Activated naive CD4-positive, alpha-beta T cell treated with anti-CD3 and anti-CD28 coated beads for 36 hours (primary cell): ENCODE measurements at regions of chr10 and their contacts with region 1.

Region 1: DNA sequence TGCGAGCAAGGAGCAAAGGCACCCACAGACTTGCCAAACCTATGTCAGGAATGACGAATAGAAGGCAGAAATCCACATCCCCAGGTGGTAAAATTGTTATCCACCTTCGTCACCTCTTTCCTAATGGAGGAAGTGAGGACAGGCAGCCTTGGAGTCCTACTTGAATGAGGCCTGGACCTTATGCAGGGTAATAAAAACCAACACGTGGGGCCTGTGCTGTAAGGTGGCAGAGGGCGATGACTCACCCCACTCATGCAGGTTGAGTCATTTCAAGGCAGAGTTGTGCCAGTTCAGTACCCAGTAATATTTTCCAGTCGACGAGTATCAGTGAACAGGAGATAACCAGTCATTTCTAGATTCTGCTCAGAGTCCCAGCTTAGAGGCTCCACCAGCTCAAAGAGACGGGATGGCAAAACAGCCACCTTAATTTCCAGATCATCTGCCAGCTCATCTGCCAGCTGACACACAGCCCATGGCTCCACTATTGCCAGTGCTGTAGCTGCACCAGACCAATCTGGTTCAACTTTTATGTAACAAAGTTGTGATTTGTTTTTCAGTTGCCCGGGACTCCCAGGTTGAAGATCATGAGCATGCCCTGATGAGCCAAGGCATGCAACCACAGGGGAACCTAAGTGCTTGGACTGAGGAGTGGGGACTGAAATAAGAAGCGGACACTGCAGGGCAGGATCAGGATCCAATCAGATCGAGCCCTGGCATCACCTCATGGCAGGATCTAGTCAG is 176.2 kb upstream of the ITGB1 start:
- DNase-seq: peak; percentile 88
- H3K4me3 Mint-ChIP-seq: peak overlapping the region; percentile 41
- H3K27ac Mint-ChIP-seq: peak overlapping the region; percentile 79
- H3K4me1 Mint-ChIP-seq: peaks cover 78% of the 10 kb centered on the region
- H3K27me3 Mint-ChIP-seq: no peaks in the 10 kb centered on the region

Region 2: GRCh38 chr10:32055813-32056600 is 1078.2 kb before region 1 on chr10 and contains the start of gene KIF5B:
- CTCF ChIA-PET with region 1: no interaction called
- intact Hi-C with region 1: loop called (anchors 5 kb)
- DNase-seq: peak; percentile 84
- H3K4me3 Mint-ChIP-seq: peak within 1 kb of the TSS; percentile 96
- H3K27ac Mint-ChIP-seq: peak within 1 kb of the TSS; percentile 92
- H3K4me1 Mint-ChIP-seq: peaks cover 39% of the 10 kb centered on the region
- H3K27me3 Mint-ChIP-seq: no peaks in the 10 kb centered on the region
- total RNA-seq, gene KIF5B: 64.9 to 67.8 TPM

Region 3: GRCh38 chr10:32068569-32068968 is 1065.6 kb before region 1 on chr10:
- CTCF ChIA-PET with region 1: no interaction called
- intact Hi-C with region 1: no loop called
- DNase-seq: no peak
- H3K4me3 Mint-ChIP-seq: no peak overlapping the region
- H3K27ac Mint-ChIP-seq: no peak overlapping the region
- H3K4me1 Mint-ChIP-seq: no peaks in the 10 kb centered on the region
- H3K27me3 Mint-ChIP-seq: no peaks in the 10 kb centered on the region

Region 4: DNA sequence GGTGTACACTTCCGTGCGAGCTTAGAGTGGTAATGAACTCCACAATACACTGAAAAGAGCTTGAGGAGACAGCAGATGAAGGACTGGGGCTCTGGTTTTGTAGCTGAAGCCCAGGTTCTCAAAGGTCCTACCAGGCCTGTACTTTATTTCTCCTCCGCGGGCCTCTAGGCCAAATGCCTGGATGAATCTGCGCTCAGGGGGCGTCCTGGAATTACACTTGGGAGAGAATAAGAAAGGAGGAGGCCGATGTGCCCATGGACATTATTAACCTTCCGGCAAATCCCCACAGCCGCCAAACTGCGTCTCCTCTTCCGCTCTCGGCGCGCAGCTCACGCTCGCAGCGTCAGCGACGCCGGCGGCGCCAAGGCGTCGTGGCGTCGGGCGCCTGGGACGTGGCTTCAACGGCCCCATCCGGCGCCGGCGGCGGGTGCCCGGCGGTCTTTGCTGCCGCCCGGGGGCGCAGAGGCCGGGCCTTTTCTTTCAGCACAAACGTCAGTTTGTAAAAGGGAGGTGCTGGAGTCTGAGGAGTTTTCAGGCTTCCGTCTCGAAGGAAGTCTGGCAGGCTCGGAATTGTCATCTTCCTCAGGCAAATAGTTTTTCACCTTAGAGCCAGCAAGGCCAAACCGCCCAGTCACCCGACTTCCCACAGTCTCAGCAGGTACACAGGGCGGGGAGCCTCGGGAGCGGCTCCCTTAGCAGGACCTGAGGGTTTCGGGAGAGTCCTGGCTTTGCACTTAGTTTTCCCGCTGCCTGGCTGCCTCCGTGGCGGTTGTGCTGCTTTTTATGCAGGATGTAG is 688.2 kb before region 1 on chr10 and contains the start of gene CCDC7:
- CTCF ChIA-PET with region 1: no interaction called
- intact Hi-C with region 1: loop called (anchors 2 kb)
- DNase-seq: peak; percentile 85
- H3K4me3 Mint-ChIP-seq: peak within 1 kb of the TSS; percentile 94
- H3K27ac Mint-ChIP-seq: peak within 1 kb of the TSS; percentile 98
- H3K4me1 Mint-ChIP-seq: peaks cover 14% of the 10 kb centered on the region
- H3K27me3 Mint-ChIP-seq: no peaks in the 10 kb centered on the region
- total RNA-seq, gene CCDC7: 6.8 to 8.9 TPM

Region 5: DNA sequence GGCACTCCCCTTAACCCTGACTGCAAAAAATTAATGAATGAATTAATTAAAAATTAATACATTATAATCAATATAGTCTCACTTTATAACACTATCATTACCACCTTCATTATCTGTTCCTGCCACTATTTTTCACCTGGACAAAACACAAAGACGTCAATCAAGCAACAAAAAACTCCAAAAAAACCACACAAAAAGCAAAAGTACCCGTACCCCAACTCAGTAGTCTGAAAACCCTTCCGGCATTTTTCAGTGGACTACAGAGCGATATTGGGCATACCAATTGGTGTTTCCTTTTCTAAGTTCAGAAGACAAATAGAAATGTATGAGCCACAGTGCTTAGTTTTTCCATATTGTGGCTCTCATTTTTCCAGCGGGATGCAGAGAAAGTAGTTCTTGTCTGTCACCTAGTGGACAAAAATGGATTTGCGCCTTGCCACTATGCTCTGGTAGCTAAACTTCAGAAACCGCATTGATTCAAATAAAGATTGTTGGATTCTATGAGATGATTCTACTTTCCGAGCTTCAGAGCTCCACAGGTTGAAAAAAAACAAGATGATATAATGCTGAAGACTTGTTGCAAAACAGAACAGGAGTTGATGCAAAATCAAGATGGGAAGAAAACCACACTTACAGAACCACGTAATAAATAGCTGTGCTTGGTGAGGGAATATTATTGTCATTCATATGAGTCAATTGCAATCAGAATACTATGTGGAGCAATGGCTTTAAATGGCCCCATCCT is 125.5 kb before region 1 on chr10:
- CTCF ChIA-PET with region 1: interaction called, 3 read pairs
- intact Hi-C with region 1: loop called (anchors 1 kb)
- DNase-seq: peak; percentile 81
- H3K4me3 Mint-ChIP-seq: peak overlapping the region; percentile 52
- H3K27ac Mint-ChIP-seq: peak overlapping the region; percentile 9
- H3K4me1 Mint-ChIP-seq: peaks cover 34% of the 10 kb centered on the region
- H3K27me3 Mint-ChIP-seq: peaks cover 9% of the 10 kb centered on the region

Region 6: DNA sequence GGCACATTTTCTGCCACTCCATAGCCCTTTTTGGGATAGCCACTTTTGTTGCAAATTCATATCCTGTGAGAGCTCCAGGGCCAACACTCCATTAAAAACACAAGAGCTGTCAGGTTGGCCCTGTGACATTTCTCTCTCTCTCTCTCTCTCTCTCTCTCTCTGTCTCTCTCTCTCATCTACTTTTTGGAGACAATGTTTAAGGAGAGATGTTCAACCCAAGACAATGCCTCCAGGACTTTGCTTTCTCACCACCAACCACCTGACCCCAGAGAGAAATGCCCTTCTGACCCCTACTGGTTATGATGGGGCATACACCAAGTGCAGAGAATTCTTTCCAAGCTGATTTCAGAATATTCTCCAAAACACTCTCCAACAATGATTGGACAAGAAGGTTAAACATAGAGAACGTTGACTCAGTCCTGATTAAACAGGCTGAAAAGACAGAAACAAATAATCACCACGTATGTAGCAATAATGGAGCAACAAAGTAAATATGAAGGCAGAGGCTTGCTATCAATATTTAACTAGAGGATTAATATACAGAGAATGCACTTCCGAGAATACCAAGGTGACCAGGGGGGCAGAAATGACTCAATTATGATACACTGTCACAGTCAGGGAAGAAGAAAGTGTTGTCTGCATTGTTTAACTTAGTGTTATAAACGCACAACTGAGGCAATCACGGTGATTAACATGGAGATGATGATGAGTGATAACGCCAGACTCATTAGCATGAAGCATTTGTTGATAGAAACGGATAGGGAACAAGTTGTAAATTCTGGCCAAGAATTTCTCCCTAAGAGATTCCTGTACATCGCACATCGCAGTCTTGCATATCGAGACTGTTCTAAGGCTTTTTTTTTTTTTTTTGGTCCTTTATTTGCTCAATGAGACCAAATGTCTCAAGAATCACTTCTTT is 21.8 kb after region 1 on chr10:
- CTCF ChIA-PET with region 1: interaction called, 9 read pairs
- intact Hi-C with region 1: loop called (anchors 1 kb)
- DNase-seq: peak; percentile 55
- H3K4me3 Mint-ChIP-seq: no peak overlapping the region
- H3K27ac Mint-ChIP-seq: no peak overlapping the region
- H3K4me1 Mint-ChIP-seq: peaks cover 35% of the 10 kb centered on the region
- H3K27me3 Mint-ChIP-seq: no peaks in the 10 kb centered on the region

Region 7: DNA sequence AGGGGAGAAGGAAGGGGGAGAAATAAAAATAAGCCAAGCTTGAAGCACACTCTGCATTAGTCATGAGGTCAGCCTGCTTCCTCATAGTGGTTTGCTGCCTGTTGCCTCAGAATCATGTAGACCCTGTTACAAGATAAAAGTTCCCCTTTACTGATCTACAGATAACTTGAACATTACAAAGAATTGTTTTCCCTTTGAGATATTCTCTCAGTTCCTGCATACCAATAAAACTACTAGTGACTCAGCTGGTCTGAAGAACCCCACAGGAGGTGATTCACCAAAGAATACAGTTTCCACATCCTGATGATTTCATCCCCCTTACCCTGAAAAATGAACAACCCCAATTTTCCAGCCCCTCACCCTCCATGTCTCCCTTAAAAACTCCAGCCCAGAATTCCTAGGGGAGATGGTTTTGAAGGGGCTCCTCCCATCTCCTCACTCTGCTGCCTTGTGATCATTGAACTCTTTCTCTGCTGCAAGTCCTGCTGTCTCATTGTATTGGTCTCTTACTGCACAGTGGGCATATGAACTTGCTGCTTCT is 231.8 kb after region 1 on chr10:
- CTCF ChIA-PET with region 1: no interaction called
- intact Hi-C with region 1: loop called (anchors 5 kb)
- DNase-seq: peak; percentile 53
- H3K4me3 Mint-ChIP-seq: no peak overlapping the region
- H3K27ac Mint-ChIP-seq: no peak overlapping the region
- H3K4me1 Mint-ChIP-seq: peaks cover 18% of the 10 kb centered on the region
- H3K27me3 Mint-ChIP-seq: peaks cover 22% of the 10 kb centered on the region

Region 8: GRCh38 chr10:35126530-35127296 is 1992.5 kb after region 1 on chr10 and contains the start of gene CREM:
- CTCF ChIA-PET with region 1: no interaction called
- intact Hi-C with region 1: loop called (anchors 5 kb)
- DNase-seq: peak; percentile 100
- H3K4me3 Mint-ChIP-seq: peak within 1 kb of the TSS; percentile 81
- H3K27ac Mint-ChIP-seq: peak within 1 kb of the TSS; percentile 95
- H3K4me1 Mint-ChIP-seq: peaks cover 48% of the 10 kb centered on the region
- H3K27me3 Mint-ChIP-seq: no peaks in the 10 kb centered on the region
- total RNA-seq, gene CREM: 107 to 111 TPM